HAP-1 (cell line): ENCODE measurements at regions of chr2 and their contacts with region 1.

Region 1: DNA sequence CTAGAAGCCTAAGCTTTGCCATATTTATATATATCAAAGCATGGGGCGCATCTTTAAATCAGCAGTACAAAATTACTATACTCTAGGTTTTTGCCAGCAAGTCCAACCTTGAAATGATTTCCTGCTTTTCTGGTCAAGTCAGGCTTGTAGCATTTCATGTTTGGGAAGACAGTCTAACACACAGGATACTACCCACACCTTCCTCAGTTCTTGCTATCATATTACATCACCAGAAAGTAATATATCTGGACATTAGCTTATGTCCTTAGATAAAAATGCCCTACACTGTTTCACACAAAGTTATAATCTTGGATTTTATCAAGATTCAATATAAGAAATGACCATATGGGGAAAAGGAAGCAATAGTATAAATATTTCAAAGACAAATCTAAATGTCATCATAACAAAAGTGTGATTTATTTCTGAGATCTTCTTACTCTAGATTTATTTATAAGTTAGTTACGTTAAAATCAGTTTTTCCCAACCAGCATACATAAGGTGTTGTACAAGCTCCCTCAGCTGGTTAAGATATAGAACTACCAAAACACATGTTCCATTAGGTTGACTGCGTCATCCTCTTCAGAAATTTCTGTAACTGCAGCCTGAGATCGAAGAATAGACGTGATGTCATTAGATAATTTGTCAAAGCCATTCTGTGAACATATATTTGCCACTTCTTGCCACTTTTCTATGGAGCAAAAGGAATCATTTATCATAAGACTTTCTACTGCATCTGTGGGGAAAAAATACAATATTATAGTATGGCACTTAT is 56.7 kb downstream of the CLHC1 start:
- DNase-seq: peak in 1 of 2 experiments; percentile 72
- H3K4me3 ChIP-seq: no peak overlapping the region
- H3K4me1 ChIP-seq: peaks cover 19% of the 10 kb centered on the region
- H3K27me3 ChIP-seq: no peaks in the 10 kb centered on the region

Region 2: DNA sequence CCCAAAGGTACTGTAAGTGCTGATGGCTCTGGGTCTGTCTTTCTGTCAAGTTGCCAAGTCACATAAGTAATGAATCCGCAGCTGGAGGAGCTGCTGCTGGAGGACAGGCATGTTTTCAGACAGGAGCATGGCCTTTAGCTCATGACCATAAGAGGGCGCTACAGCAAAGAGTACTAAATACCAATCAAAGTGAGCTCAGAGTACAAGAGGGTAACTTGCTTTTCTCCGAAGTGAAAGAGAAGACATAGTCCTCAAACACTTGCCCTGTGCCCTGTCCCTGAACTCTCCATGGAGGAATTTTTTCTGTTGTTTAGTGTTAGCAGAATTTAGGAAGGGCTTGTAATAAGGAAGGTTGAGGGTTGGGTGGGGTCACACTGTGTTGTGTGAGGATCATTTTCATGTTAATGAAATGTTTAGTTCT is 510.0 kb before region 1 on chr2:
- in situ Hi-C with region 1: loop called (anchors 25 kb)
- DNase-seq: peak; percentile 76 to 82
- H3K4me3 ChIP-seq: no peak overlapping the region
- H3K4me1 ChIP-seq: peaks cover 10% of the 10 kb centered on the region
- H3K27me3 ChIP-seq: no peaks in the 10 kb centered on the region